ENCODE measurements at regions of chr13 and their contacts with region 1.

Region 1: GRCh38 chr13:36981156-36981743 is 17.9 kb downstream of the ALG5 start:
- DNase-seq: no peak
- ATAC-seq: no peak

Region 2: DNA sequence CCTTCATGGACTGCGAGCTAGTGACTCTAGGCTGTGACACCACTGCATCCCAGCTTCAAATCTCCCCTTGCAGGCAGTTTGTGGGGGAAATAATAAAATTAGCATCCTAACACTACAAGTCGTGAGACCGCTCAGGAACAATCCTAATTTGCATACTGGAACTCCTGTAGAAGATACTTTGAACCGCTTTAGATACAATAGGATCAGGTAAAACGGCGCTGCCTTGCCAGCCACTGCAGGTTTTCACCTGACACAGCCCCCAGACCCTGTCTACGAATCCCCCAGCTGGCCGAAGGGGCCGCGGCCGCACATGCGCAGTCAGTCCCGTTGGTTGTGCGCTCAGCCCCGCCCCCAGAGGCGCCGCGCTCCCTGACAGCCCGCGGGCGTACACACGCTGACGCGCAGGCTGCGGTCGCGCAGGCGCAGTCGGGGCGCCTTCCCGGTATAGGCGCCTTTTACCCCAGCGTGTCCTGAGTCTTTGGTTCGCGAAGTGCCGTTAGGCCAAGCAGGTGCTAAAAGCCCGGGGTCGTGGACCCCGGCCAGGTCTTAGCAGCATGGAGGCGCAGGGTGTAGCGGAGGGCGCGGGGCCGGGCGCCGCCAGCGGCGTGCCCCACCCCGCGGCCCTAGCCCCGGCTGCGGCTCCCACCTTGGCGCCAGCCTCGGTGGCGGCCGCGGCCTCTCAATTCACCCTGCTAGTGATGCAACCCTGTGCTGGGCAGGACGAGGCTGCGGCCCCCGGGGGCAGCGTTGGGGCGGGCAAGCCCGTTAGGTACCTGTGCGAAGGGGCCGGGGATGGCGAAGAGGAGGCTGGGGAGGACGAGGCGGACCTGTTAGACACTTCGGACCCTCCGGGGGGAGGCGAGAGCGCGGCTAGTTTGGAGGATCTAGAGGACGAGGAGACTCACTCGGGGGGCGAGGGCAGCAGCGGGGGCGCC is 162.2 kb before region 1 on chr13 and contains the start of gene RFXAP:
- intact Hi-C with region 1: no loop called
- DNase-seq: peak; percentile 94
- ATAC-seq: peak; percentile 98 to 99
- total RNA-seq, gene RFXAP: 2.7 to 3.5 TPM

Region 3: DNA sequence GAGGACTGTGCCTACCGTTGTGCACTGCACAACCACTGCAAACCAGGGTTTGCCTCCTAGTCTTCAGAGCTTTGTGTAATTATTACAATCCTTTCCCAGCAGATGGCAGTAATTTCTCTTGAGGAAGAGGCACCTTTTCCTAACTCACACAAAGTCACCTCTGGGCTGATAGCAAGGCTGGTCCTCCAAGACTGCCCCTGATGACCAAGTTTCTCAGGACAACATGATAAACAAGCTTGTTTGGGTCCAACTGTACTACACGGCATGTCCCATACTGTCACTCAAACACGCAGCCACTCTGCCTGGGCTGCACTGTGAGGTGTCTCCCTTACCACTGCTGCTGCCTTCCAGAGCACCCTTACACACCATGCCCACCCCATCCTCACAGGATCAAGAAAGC is 123.0 kb before region 1 on chr13:
- intact Hi-C with region 1: loop called in 1 of 2 experiments (anchors 5 kb)
- DNase-seq: no peak
- ATAC-seq: peak; percentile 63 to 70

Region 4: DNA sequence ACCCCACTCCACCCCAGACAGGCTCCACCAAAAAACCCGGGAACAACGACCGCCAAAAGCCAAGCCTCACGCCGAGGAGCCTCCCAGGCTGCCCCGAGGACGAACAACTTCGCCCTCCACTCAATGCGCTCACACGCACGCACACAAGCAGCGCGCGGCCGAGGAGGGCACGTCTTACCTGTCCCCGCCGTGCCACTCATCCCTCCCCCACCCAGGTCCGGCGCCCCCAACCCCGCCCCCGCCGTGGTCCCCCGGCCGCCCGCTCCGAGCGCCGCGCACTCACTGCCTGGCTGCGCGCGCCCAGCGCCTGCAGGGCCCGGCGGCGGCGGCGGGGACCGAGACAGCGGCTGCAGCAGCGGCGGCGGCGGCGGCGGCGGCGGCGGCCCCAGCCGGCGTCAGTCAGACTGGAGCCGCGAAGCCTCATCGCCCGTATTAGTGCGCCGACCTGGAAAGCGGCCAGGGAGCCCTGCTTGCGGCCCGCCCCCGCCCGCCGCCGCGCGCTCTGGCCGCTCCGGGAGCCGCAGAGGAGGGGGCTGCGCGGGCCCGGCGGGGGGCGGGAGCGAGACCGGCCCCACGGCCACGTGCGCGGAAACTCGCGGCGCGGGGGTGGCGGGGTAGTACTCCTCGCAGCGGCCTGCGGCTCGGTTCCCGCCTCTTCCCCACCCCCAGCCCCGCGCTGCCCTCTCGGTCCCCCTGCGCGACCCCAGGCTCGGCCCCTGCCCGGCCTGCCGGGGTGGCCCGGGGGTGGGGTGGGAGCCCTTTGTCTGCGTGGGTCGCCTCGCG is 61.2 kb before region 1 on chr13 and contains the start of gene SMAD9:
- intact Hi-C with region 1: no loop called
- DNase-seq: peak; percentile 89
- ATAC-seq: peak; percentile 82 to 84
- total RNA-seq, gene SMAD9: 3.8 to 7.8 TPM